GM10248 (cell line): ENCODE measurements at regions of chr5 and their contacts with region 1.

Region 1: DNA sequence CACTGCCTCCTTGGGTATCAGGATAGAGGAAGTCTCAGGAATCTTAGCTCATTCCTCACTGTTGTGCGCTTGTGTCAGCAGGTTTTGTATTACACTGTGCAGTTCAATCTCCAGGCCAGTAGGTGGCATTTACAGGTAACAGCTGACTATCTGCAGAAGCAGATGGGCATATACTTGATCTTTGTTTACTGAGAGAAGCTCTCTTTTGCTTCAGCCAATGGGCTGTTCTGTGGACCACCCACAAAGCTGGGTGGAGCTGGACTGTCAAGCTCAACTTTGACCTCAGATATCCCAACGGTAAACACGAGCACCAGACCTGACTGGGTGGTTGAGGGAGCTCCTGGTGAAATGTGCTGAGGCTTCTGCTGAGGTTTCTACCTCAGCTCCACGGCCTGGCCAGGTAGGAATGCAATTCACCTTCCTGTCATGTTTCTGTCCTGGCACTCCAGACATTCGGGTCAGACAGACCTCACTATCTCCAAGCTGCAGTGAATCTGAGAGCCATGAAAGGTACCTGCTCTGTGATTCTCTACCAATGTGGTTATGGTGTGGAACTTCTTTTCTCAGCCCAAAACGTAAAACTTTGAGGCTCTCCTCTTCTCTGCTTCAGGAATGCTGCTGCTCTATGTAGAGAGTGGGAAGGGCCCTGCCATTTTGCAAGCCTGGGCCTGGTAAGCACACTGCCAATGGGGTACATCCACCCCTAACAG is 167.9 kb upstream of the ACTBL2 start:
- DNase-seq: peak; percentile 10
- CTCF ChIP-seq: peak; percentile 80

Region 2: GRCh38 chr5:57456531-57457135 is 193.9 kb before region 1 on chr5:
- CTCF ChIA-PET with region 1: no interaction called
- POLR2A ChIA-PET with region 1: no interaction called
- DNase-seq: no peak
- CTCF ChIP-seq: no peak

Region 3: DNA sequence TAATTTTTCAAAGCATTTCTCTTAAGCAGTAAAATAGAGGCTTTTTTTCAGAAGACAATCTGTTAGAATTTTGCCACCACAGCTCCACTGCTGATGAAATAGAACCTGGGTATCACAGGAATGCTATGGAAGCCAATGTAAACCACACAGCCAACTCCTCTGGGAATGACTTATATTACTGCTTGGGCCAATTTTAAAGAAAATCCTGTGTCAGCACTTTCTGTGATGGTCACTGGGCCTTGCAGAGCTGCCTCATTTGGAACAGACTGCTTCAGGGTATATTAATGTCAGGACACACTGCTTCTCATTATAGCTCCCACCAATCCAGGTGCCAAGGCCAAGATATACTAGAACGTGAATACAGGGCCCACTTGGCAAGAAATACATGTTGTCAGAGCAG is 23.8 kb before region 1 on chr5:
- CTCF ChIA-PET with region 1: interaction called, 74 read pairs
- POLR2A ChIA-PET with region 1: no interaction called
- DNase-seq: no peak
- CTCF ChIP-seq: no peak

Region 4: GRCh38 chr5:57635146-57635777 is 15.3 kb before region 1 on chr5:
- CTCF ChIA-PET with region 1: interaction called, 74 read pairs
- POLR2A ChIA-PET with region 1: no interaction called
- DNase-seq: no peak
- CTCF ChIP-seq: no peak

Region 5: GRCh38 chr5:57662991-57663390 is 12.5 kb after region 1 on chr5:
- CTCF ChIA-PET with region 1: interaction called, 30 read pairs
- POLR2A ChIA-PET with region 1: no interaction called
- DNase-seq: no peak
- CTCF ChIP-seq: no peak